Endothelial cell of umbilical vein (primary cell): ENCODE measurements at regions of chr1 and their contacts with region 1.

Region 1: GRCh38 chr1:160006312-160006940 is 25.4 kb downstream of the PIGM start:
- DNase-seq: peak; percentile 55
- H3K4me3 ChIP-seq: no peak overlapping the region
- H3K27ac ChIP-seq: no peak overlapping the region
- H3K4me1 ChIP-seq: no peaks in the 10 kb centered on the region
- H3K27me3 ChIP-seq: peaks cover 16 to 19% of the 10 kb centered on the region in 2 experiments
- CTCF ChIP-seq: peak; percentile 86 to 91
- POLR2A ChIP-seq: no peak

Region 2: DNA sequence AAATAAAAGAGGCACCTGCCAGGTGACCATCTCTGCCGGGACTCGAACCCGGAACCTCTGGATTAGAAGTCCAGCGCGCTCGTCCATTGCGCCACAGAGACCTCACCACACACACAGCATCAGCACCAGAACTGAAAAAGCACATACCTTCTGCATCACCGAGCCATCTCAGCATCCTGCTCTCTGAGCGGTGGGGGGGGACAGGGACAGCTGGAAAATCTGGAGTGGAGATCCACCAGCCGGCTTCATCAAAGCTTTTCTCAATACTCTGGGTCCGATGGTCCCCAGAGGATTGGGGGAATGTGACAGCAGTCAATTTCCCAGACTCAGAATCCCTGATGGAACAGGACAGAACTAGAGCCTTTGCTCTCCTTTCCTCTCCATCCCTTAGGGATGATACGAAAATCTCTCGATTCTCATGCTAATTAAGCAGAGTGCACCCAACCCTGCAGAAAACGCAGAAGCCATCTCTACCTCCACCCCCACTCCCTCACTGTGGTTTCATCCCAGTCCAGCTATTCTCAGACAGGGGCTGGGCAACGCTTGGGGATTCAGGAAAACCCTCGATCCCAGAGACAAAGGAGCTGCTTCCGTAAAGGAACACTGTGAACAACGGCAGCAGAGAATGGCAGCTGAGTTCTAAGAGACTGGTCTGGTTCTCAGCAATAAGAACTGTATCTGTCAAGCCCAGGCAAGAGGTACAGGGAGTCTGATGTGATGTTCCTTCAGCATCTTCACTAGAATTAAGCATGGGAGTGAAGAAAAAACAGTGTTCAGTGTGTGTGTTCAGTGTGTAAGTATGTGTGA is 864.6 kb before region 1 on chr1:
- CTCF ChIA-PET with region 1: interaction called, 11 read pairs
- POLR2A ChIA-PET with region 1: no interaction called
- dilution Hi-C with region 1: no loop called
- intact Hi-C with region 1: no loop called
- DNase-seq: peak; percentile 53
- H3K4me3 ChIP-seq: no peak overlapping the region
- H3K27ac ChIP-seq: no peak overlapping the region
- H3K4me1 ChIP-seq: peaks cover 5% of the 10 kb centered on the region
- H3K27me3 ChIP-seq: peaks cover 23 to 41% of the 10 kb centered on the region in 2 experiments
- CTCF ChIP-seq: no peak
- POLR2A ChIP-seq: no peak

Region 3: GRCh38 chr1:159790237-159790917 is 216.0 kb before region 1 on chr1:
- CTCF ChIA-PET with region 1: interaction called, 10 read pairs
- POLR2A ChIA-PET with region 1: no interaction called
- dilution Hi-C with region 1: no loop called
- intact Hi-C with region 1: no loop called
- DNase-seq: peak; percentile 57
- H3K4me3 ChIP-seq: no peak overlapping the region
- H3K27ac ChIP-seq: no peak overlapping the region
- H3K4me1 ChIP-seq: peaks cover 16% of the 10 kb centered on the region
- H3K27me3 ChIP-seq: no peaks in the 10 kb centered on the region
- CTCF ChIP-seq: peak; percentile 61 to 65
- POLR2A ChIP-seq: no peak

Region 4: DNA sequence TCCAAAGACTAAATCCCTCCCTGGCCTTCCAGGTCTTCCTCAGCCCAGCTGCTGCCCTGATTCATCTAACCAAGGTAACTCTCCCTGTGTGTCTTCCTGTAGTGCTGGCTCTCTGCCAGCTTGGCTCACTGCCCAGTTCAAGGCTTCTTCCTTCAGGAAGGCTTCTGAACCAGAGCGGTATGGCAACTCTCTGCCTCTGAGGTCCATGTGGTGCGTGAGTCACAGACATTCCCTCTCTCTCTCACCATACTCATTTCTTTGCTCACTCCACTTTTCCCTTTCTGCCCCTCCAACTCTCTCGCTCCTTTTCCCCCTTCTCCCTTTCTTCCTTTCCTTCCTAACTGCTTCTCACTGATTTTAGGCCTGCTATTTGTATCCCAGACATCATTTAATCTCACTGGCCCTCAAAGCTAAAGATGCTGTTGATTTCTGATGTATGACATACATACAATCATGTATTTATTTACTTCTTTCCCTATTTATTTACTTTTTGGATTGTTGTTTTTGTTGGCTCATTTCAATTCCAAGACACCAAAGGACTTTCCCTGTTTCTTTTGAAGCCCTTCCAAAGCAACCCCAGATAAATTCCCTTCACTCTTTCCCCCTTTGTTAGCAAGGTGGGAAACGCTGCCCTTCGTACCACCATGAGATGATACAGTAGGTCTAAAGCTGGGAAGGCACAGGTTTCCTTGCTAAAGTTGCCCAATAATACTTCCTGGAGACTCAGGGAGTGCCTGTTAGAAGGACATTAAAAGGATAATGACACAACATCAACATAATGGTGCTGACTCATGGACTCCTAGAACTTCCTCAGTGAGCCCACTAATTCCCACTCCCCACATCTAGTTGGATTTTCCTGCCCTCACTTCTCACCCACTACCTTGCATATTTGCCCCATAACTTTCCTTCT is 124.2 kb before region 1 on chr1:
- CTCF ChIA-PET with region 1: no interaction called
- POLR2A ChIA-PET with region 1: no interaction called
- dilution Hi-C with region 1: no loop called
- intact Hi-C with region 1: no loop called
- DNase-seq: peak; percentile 89
- H3K4me3 ChIP-seq: no peak overlapping the region
- H3K27ac ChIP-seq: peak overlapping the region; percentile 70
- H3K4me1 ChIP-seq: peaks cover 16% of the 10 kb centered on the region
- H3K27me3 ChIP-seq: no peaks in the 10 kb centered on the region
- CTCF ChIP-seq: no peak
- POLR2A ChIP-seq: peak; percentile 40

Region 5: DNA sequence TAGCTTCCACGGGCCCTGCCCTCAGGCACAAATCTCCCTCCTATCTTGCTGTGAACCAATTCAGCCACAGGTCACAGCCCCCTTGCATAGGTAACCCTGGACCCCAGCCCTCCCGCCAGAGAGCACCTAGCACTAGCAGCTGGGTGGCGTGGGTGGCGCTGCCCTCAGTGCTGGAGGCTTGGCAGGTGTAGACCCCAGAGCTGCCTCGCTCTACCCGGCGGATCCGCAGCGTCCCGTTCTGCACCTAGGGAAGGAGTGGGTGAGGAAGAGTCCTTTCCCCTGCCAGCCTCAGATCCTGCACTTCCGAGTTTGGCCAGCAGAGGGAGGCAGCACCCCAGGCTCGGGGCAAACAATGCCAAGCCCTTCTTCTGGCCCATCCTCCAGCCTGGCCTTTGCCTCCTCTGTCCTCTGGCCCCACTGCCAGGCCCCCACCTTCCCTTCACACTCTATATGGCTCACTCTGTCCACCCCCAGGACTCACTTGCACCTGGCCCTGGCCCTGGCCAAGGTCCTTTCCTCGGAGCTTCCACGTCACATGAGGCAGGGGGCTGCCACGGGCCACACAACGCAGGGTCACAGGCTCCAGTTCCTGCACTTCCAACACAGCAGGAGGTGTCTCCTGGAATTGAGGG is 70.0 kb before region 1 on chr1:
- CTCF ChIA-PET with region 1: interaction called, 169 read pairs
- POLR2A ChIA-PET with region 1: no interaction called
- dilution Hi-C with region 1: no loop called
- intact Hi-C with region 1: loop called (anchors 1 kb)
- DNase-seq: peak; percentile 47
- H3K4me3 ChIP-seq: no peak overlapping the region
- H3K27ac ChIP-seq: no peak overlapping the region
- H3K4me1 ChIP-seq: no peaks in the 10 kb centered on the region
- H3K27me3 ChIP-seq: peaks cover 0 to 14% of the 10 kb centered on the region in 2 experiments
- CTCF ChIP-seq: peak; percentile 86 to 98
- POLR2A ChIP-seq: no peak

Region 6: GRCh38 chr1:159991513-159991912 is 14.9 kb before region 1 on chr1:
- CTCF ChIA-PET with region 1: interaction called, 79 read pairs
- POLR2A ChIA-PET with region 1: no interaction called
- dilution Hi-C with region 1: no loop called
- intact Hi-C with region 1: no loop called
- DNase-seq: no peak
- H3K4me3 ChIP-seq: no peak overlapping the region
- H3K27ac ChIP-seq: no peak overlapping the region
- H3K4me1 ChIP-seq: no peaks in the 10 kb centered on the region
- H3K27me3 ChIP-seq: peaks cover 4 to 10% of the 10 kb centered on the region in 2 experiments
- CTCF ChIP-seq: no peak
- POLR2A ChIP-seq: no peak

Region 7: GRCh38 chr1:160078512-160079195 is 72.2 kb after region 1 on chr1:
- CTCF ChIA-PET with region 1: interaction called, 10 read pairs
- POLR2A ChIA-PET with region 1: no interaction called
- dilution Hi-C with region 1: no loop called
- intact Hi-C with region 1: no loop called
- DNase-seq: peak; percentile 26
- H3K4me3 ChIP-seq: no peak overlapping the region
- H3K27ac ChIP-seq: no peak overlapping the region
- H3K4me1 ChIP-seq: no peaks in the 10 kb centered on the region
- H3K27me3 ChIP-seq: peaks cover 44 to 56% of the 10 kb centered on the region in 2 experiments
- CTCF ChIP-seq: peak; percentile 80 to 87
- POLR2A ChIP-seq: no peak

Region 8: GRCh38 chr1:160739098-160739511 is 732.7 kb after region 1 on chr1 and contains the start of gene SLAMF7:
- CTCF ChIA-PET with region 1: no interaction called
- POLR2A ChIA-PET with region 1: no interaction called
- dilution Hi-C with region 1: no loop called
- intact Hi-C with region 1: no loop called
- DNase-seq: no peak
- H3K4me3 ChIP-seq: no peak within 1 kb of the TSS
- H3K27ac ChIP-seq: no peak within 1 kb of the TSS
- H3K4me1 ChIP-seq: no peaks in the 10 kb centered on the region
- H3K27me3 ChIP-seq: peaks cover 0 to 2% of the 10 kb centered on the region in 2 experiments
- CTCF ChIP-seq: no peak
- POLR2A ChIP-seq: no peak
- total RNA-seq, gene SLAMF7: not detected in 2 replicates